ENCODE measurements at regions of chr9 and their contacts with region 1.

Region 1: DNA sequence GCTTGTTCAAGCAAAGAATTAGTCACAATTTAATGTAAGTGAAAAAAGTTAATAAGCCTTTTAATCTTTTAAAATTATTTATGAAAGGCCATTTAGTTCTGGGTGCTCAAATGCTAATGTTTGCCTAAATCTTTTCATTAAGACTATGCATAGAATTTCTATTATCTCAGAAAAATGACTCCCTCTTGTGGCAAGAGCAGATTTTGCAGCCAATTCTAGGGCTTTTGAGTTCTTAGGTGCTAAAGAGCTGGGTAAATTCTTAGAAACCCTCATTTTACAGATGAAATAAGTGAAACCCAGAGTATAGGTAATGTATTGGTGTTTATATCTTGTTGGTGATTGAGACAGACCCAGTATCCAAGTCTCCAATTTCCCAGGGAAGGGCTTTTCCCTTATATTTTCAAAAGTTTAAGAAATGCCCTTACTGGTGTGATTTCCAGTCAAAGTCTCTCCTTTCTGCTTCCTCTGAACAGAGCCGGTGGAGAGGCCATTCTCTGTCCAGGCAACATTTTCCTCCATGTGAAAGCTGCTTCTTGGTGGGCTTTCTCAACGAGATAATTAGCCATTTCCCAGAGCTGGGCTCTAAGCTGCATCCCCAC is 24.1 kb upstream of the PCSK5 start:
- DNase-seq: peak; percentile 18
- H3K4me3 Mint-ChIP-seq: no peak overlapping the region
- H3K27ac Mint-ChIP-seq: no peak overlapping the region
- H3K4me1 Mint-ChIP-seq: peaks cover 3% of the 10 kb centered on the region
- H3K27me3 Mint-ChIP-seq: peaks cover 7% of the 10 kb centered on the region

Region 2: DNA sequence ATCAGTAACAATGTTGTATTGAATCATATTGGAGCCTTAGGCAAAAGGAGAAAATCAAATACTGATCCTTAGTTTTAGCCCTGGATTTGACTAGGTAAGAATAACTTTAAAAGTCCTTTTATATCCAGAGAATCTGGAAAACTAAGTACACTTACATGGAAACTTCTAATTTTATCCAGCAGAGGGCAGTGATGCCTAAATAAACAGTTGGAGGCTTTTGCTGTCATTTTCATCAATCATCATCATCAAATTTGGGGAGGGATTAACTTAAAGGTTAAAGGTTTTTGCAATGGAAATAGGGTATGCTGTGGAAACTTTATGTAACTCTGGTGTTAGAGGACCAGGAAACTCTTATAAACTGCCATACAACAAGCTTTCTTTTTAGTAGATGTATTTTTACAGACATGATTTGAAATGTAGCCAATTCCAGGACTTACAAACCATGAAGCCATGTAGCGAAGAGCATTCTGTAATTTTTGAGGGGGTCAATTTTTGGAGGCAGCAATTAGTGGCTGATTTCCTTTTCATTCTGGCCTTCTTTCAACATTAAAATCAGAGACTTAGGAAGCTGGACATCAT is 665.4 kb before region 1 on chr9:
- CTCF ChIA-PET with region 1: interaction called, 5 read pairs
- POLR2A ChIA-PET with region 1: no interaction called
- intact Hi-C with region 1: loop called (anchors 1 kb)
- DNase-seq: no peak
- H3K4me3 Mint-ChIP-seq: no peak overlapping the region
- H3K27ac Mint-ChIP-seq: no peak overlapping the region
- H3K4me1 Mint-ChIP-seq: no peaks in the 10 kb centered on the region
- H3K27me3 Mint-ChIP-seq: no peaks in the 10 kb centered on the region

Region 3: GRCh38 chr9:75265525-75265972 is 600.8 kb before region 1 on chr9:
- CTCF ChIA-PET with region 1: interaction called, 4 read pairs
- POLR2A ChIA-PET with region 1: no interaction called
- intact Hi-C with region 1: loop called (anchors 2 kb)
- DNase-seq: peak; percentile 55
- H3K4me3 Mint-ChIP-seq: no peak overlapping the region
- H3K27ac Mint-ChIP-seq: no peak overlapping the region
- H3K4me1 Mint-ChIP-seq: no peaks in the 10 kb centered on the region
- H3K27me3 Mint-ChIP-seq: no peaks in the 10 kb centered on the region

Region 4: GRCh38 chr9:75826314-75826713 is 40.1 kb before region 1 on chr9:
- CTCF ChIA-PET with region 1: no interaction called
- POLR2A ChIA-PET with region 1: no interaction called
- intact Hi-C with region 1: no loop called
- DNase-seq: no peak
- H3K4me3 Mint-ChIP-seq: no peak overlapping the region
- H3K27ac Mint-ChIP-seq: no peak overlapping the region
- H3K4me1 Mint-ChIP-seq: no peaks in the 10 kb centered on the region
- H3K27me3 Mint-ChIP-seq: peaks cover 10% of the 10 kb centered on the region

Region 5: GRCh38 chr9:75890472-75891276 is 24.3 kb after region 1 on chr9 and contains the start of gene PCSK5:
- CTCF ChIA-PET with region 1: interaction called, 12 read pairs
- POLR2A ChIA-PET with region 1: no interaction called
- intact Hi-C with region 1: no loop called
- DNase-seq: peak; percentile 90
- H3K4me3 Mint-ChIP-seq: peak within 1 kb of the TSS; percentile 91
- H3K27ac Mint-ChIP-seq: peak within 1 kb of the TSS; percentile 61
- H3K4me1 Mint-ChIP-seq: peaks cover 28% of the 10 kb centered on the region
- H3K27me3 Mint-ChIP-seq: peaks cover 13% of the 10 kb centered on the region
- total RNA-seq, gene PCSK5: 2.0 to 2.1 TPM

Region 6: DNA sequence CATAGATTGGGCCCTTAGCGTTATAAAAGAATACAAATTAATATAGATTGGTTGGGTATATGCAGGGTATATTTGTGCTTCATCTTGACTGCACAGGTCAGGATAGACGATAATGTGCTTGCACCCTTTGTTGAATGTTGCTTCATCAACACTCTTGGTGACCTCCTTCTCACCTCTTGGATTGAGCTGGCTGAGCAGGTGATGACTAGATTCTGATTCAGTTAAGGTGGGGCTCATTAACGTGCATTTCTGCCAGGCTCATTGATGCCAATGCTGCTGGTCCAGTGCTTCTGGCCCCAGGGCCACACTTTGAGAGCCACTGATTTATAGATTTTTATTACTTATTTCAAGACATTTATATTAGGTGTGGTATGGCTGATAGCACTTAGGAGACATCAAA is 51.8 kb after region 1 on chr9:
- CTCF ChIA-PET with region 1: interaction called, 12 read pairs
- POLR2A ChIA-PET with region 1: no interaction called
- intact Hi-C with region 1: no loop called
- DNase-seq: peak; percentile 56
- H3K4me3 Mint-ChIP-seq: no peak overlapping the region
- H3K27ac Mint-ChIP-seq: no peak overlapping the region
- H3K4me1 Mint-ChIP-seq: peaks cover 12% of the 10 kb centered on the region
- H3K27me3 Mint-ChIP-seq: no peaks in the 10 kb centered on the region

Region 7: GRCh38 chr9:75993434-75993833 is 127.1 kb after region 1 on chr9:
- CTCF ChIA-PET with region 1: no interaction called
- POLR2A ChIA-PET with region 1: no interaction called
- intact Hi-C with region 1: no loop called
- DNase-seq: no peak
- H3K4me3 Mint-ChIP-seq: no peak overlapping the region
- H3K27ac Mint-ChIP-seq: no peak overlapping the region
- H3K4me1 Mint-ChIP-seq: peaks cover 32% of the 10 kb centered on the region
- H3K27me3 Mint-ChIP-seq: no peaks in the 10 kb centered on the region

Region 8: DNA sequence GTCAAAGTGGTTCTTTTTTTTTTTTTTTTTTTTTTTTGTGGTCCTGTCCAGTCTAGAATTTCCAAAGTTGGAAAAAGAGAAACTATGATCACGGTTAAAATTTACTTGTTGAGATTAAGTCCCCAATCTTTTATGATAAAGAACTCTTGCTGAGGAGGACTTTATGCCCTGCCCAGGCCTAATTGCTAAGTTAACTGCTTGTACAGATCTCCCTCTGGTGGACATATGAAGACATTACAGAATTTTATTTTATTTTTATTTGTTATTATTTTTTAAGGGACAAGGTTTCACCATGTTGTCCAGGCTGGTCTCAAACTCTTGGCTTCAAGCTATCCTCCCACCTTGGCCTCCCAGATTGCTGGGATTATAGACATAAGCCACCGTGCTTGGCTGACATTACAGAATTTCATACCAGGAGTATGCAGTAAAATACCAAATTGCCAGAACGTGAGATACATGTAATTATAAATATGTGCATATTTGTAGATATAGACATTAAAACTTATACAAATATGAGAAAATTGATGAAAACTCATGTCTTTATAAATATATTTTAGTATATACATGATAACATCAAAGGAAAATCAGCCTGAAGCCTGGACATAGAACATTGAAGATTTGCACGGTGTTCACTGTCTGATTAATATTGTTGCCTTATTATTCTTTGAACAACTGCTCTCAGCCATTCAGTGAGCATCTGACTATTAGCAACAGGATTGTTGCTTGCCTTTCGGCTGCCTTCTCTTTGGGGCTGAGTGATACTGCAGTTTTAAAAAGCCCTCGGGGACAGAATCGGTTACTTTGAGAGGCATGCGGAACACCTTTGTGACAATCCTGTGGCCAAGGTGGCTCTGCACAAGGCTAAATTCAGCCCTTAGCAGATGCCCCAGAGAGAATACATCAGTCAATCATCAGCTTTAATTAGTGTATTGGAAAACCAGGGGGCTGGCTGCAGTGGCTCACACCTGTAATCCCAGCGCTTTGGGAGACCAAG is 436.9 kb after region 1 on chr9:
- CTCF ChIA-PET with region 1: interaction called, 4 read pairs
- POLR2A ChIA-PET with region 1: no interaction called
- intact Hi-C with region 1: loop called (anchors 2 kb)
- DNase-seq: no peak
- H3K4me3 Mint-ChIP-seq: no peak overlapping the region
- H3K27ac Mint-ChIP-seq: no peak overlapping the region
- H3K4me1 Mint-ChIP-seq: no peaks in the 10 kb centered on the region
- H3K27me3 Mint-ChIP-seq: peaks cover 9% of the 10 kb centered on the region